ENCODE measurements at regions of chr12 and their contacts with region 1.

Region 1: DNA sequence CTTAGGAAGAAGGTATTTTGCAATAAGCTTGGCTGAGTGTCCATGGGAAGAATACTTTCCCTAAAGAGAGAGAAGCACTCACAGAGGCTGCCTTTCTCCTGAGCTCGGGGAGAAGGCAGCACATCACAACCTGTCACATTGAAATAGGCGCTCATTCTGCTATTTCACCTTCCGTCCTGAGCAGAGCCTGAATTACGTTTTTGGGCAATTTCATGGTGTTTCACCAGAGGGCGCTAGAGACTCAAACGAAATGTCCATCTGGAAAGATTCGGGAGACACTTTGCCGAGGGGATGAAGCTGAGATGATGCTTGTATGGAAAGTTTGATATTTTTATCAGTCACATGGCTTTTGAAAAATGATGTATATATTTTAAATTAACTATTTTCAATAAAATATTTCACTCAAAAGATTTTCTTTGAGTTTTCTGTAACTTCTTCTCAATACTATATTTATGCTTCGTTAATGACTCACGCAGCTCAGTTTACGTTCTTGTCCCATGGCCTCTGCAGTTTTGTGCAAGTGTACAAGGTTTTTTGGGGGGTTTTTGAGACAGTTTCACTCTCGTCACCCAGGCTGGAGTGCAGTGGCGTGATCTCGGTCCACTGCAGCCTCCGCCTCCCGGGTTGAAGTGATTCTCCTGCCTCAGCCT is 17.4 kb upstream of the B4GALNT3 start:
- DNase-seq: peak; percentile 74

Region 2: DNA sequence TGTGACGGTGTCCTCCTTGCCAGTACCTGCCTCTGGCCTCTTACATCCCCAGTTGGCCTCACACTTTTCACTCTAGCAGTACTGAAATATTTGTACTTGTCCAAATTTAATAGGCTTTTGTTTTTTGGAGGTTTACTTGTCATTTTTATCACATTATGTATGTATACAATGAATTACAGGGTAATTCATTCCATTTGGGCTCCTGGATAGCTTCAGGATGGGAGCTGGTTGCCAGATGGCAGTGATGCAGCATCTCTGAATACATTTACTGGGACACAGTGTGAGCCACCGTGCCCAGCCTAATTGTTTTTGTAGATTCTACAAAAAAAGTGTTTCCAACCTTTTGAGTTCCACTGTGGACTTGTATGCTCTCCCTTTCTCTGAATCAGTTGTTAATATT is 27.5 kb before region 1 on chr12:
- CTCF ChIA-PET with region 1: no interaction called
- POLR2A ChIA-PET with region 1: no interaction called
- DNase-seq: no peak

Region 3: DNA sequence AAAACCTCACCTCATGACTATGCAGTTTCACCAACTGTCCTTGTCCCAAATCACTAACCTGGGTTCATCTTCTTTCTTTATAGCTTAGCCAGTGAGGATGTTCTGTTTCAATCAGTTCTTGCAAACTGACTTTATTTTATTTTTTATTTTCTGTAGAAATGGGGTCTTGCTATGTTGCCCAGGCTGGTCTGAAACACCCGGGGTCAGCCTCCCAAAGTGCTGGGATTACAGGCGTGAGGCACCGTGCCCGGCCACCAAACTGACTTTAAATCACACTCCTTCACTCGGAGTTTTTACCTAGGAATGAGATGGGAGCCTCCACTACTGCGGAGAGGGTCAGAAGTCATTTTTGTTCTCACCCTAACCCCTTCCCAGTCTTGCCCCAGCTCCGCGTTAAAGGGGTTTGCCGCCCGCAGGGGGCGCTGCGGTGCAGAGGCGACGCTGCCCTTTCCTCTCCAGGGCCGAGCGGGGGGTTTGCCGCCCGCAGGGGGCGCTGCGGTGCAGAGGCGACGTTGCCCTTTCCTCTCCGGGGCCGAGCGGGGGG is 10.4 kb after region 1 on chr12:
- CTCF ChIA-PET with region 1: interaction called, 10 read pairs
- POLR2A ChIA-PET with region 1: no interaction called
- DNase-seq: no peak

Region 4: DNA sequence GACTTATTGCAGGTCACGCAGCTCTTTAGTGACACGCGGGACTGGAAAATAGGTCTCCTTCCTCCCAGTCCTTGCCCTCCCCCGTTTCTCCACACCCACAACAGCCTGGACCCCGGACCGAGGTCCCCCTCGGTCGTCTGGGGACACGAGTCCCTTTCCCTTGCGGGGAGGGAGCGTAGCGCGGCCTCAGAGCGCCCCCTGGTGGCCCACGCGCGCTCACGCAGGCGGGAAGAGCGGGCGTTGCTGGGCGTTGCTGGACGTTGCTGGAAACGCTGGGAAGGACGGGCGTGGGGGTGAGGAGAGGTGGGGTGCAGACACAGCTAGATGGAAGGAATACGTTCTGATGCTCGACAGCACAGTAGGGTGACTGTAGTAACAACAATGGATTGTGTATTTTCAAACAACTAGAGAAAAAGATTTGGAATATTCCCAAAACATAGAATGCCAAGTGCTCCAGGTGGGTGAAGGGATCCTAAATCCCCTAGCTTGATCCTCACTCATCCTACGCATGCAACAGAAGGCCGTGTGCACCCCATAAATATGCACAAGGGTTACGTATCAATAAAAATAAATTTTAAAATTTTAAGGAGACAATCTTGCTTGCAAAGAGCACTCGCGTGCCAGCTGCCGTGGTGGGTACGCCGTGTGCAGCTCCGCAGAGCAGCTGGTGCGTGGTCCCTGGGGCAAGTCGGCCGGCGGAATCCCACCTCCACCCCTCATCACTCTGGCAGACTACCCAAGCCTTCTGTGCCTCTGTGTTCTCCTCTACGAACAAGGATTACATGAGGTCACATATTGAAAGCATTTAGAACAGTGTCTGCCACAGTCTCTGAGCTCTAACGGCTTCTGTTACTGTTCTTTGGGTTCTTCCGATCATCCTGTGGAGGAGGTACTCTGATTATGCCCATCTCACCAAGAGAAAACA is 104.8 kb after region 1 on chr12:
- CTCF ChIA-PET with region 1: interaction called, 21 read pairs
- POLR2A ChIA-PET with region 1: no interaction called
- DNase-seq: peak; percentile 93